CD4-positive, alpha-beta T cell (primary cell): ENCODE measurements at regions of chr9 and their contacts with region 1.

Region 1: GRCh38 chr9:33076358-33077004 is at the start of gene SMU1:
- DNase-seq: peak; percentile 90 to 98 (median 94)
- ATAC-seq: peak; percentile 90
- H3K4me3 ChIP-seq: peak within 1 kb of the TSS; percentile 67
- H3K4me3 Mint-ChIP-seq: peak within 1 kb of the TSS; percentile 97
- H3K27ac ChIP-seq: peak within 1 kb of the TSS; percentile 88 to 94
- H3K27ac Mint-ChIP-seq: peak within 1 kb of the TSS; percentile 98
- H3K4me1 ChIP-seq: peaks cover 42% of the 10 kb centered on the region
- H3K4me1 Mint-ChIP-seq: peaks cover 48% of the 10 kb centered on the region
- H3K27me3 ChIP-seq: no peaks in the 10 kb centered on the region
- H3K27me3 Mint-ChIP-seq: no peaks in the 10 kb centered on the region
- CTCF ChIP-seq: no peak
- total RNA-seq, gene SMU1: 25.1 to 26.0 TPM

Region 2: GRCh38 chr9:32940740-32941139 is 135.7 kb before region 1 on chr9:
- CTCF ChIA-PET with region 1: no interaction called
- POLR2A ChIA-PET with region 1: no interaction called
- intact Hi-C with region 1: no loop called
- DNase-seq: no peak
- ATAC-seq: no peak
- H3K4me3 ChIP-seq: no peak overlapping the region
- H3K4me3 Mint-ChIP-seq: no peak overlapping the region
- H3K27ac ChIP-seq: no peak overlapping the region
- H3K27ac Mint-ChIP-seq: no peak overlapping the region
- H3K4me1 ChIP-seq: no peaks in the 10 kb centered on the region
- H3K4me1 Mint-ChIP-seq: no peaks in the 10 kb centered on the region
- H3K27me3 ChIP-seq: no peaks in the 10 kb centered on the region
- H3K27me3 Mint-ChIP-seq: no peaks in the 10 kb centered on the region
- CTCF ChIP-seq: no peak

Region 3: GRCh38 chr9:33024966-33025571 is 51.4 kb before region 1 on chr9 and contains the start of gene DNAJA1:
- CTCF ChIA-PET with region 1: interaction called, 3 read pairs
- POLR2A ChIA-PET with region 1: interaction called, 33 read pairs
- intact Hi-C with region 1: loop called in 1 of 2 experiments (anchors 1 kb)
- DNase-seq: peak; percentile 90 to 98 (median 96)
- ATAC-seq: peak; percentile 83
- H3K4me3 ChIP-seq: peak within 1 kb of the TSS; percentile 90
- H3K4me3 Mint-ChIP-seq: peak within 1 kb of the TSS; percentile 96
- H3K27ac ChIP-seq: peak within 1 kb of the TSS; percentile 99 to 100
- H3K27ac Mint-ChIP-seq: peak within 1 kb of the TSS; percentile 93
- H3K4me1 ChIP-seq: peaks cover 43% of the 10 kb centered on the region
- H3K4me1 Mint-ChIP-seq: peaks cover 73% of the 10 kb centered on the region
- H3K27me3 ChIP-seq: no peaks in the 10 kb centered on the region
- H3K27me3 Mint-ChIP-seq: no peaks in the 10 kb centered on the region
- CTCF ChIP-seq: no peak
- total RNA-seq, gene DNAJA1: 150 to 156 TPM

Region 4: GRCh38 chr9:33044127-33044673 is 32.3 kb before region 1 on chr9:
- CTCF ChIA-PET with region 1: no interaction called
- POLR2A ChIA-PET with region 1: interaction called, 3 read pairs
- intact Hi-C with region 1: loop called in 1 of 2 experiments (anchors 5 kb)
- DNase-seq: peak; percentile 18 to 89 (median 51)
- ATAC-seq: peak; percentile 80
- H3K4me3 ChIP-seq: peak overlapping the region; percentile 63
- H3K4me3 Mint-ChIP-seq: peak overlapping the region; percentile 83
- H3K27ac ChIP-seq: peak overlapping the region; percentile 3 to 37
- H3K27ac Mint-ChIP-seq: peak overlapping the region; percentile 80
- H3K4me1 ChIP-seq: peaks cover 15% of the 10 kb centered on the region
- H3K4me1 Mint-ChIP-seq: peaks cover 24% of the 10 kb centered on the region
- H3K27me3 ChIP-seq: no peaks in the 10 kb centered on the region
- H3K27me3 Mint-ChIP-seq: no peaks in the 10 kb centered on the region
- CTCF ChIP-seq: no peak

Region 5: DNA sequence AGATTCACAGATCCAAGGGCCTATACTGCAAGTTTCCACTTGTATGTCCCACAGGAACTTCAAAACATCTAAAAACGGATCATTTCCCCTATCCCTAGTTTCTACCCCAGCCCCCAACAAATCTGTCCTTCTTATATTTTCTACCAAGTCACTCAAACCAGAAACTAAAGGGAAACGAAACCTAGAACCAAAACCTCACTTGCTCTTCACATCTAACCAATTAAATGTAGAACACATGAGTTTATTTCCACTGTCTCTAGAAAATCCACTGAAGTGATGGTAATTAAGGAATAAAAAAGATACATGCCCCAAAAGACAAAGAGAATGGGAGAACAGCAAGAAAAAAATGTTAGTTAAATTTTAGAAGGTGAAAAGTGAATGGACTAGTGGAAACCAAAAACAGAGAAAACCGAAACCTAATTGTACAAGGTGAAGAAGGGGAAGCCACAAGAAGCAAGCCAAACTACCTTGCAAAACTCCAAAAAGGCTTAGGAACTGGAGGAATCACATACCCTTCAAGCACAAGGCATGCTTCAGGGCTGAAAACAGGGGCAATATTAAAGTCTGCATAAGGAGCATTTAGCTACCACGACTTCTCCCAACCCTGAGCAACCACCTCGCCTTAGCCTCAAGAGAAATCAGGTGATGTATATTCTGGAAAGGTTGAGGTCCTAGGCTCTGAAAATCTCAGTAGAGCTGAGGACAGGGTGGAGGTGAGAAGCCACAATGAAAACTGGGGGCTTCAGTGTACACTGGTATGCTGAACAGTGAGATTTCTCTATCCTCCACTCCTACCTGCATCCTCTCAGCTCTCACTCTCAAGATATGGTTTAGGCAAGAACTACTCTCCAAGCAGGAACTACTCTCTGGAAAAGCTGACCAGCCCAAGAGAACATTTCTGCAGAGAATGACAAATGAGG is 11.1 kb before region 1 on chr9:
- CTCF ChIA-PET with region 1: interaction called, 3 read pairs
- POLR2A ChIA-PET with region 1: interaction called, 11 read pairs
- intact Hi-C with region 1: no loop called
- DNase-seq: peak in 1 of 14 experiments; percentile 13
- ATAC-seq: no peak
- H3K4me3 ChIP-seq: no peak overlapping the region
- H3K4me3 Mint-ChIP-seq: no peak overlapping the region
- H3K27ac ChIP-seq: no peak overlapping the region
- H3K27ac Mint-ChIP-seq: no peak overlapping the region
- H3K4me1 ChIP-seq: no peaks in the 10 kb centered on the region
- H3K4me1 Mint-ChIP-seq: peaks cover 14% of the 10 kb centered on the region
- H3K27me3 ChIP-seq: no peaks in the 10 kb centered on the region
- H3K27me3 Mint-ChIP-seq: no peaks in the 10 kb centered on the region
- CTCF ChIP-seq: no peak

Region 6: DNA sequence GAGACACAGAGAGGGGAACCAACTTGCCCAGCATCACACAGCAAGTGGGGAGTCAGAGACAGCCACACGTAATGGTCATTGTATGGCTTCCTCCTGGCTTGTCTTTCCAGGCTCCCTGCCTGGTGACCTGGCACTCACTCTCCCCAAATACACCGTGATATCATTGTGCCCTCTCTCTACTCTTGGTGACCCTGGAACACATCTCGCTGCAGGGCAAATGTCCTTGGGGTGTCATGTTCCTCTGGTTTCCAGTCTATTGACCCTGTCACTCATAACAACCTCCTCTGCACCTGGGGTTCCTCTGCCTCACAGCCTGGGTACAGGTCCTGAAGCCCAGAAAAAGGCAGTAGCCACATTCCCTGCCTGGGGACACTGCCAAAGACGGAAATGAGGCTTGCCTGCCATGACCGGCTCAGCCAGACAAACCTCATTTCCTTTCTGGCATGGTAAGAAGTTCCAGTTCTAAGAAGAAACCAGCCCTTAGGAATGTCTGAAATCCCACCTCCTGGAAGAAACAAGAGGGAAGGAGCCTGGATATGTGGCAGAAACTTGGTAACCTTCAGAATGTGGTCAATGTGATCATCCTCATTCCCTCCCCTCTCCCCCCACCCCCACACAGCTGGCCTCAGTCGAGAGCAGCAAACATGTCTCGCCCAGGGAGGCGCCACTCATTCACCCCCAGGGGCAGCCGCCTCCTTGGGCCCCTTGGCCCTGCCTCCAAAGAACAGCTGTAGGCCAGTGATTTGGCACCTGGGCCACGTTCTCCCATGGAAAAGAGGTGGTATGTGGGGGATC is 30.5 kb after region 1 on chr9:
- CTCF ChIA-PET with region 1: no interaction called
- POLR2A ChIA-PET with region 1: no interaction called
- intact Hi-C with region 1: no loop called
- DNase-seq: no peak
- ATAC-seq: no peak
- H3K4me3 ChIP-seq: no peak overlapping the region
- H3K4me3 Mint-ChIP-seq: no peak overlapping the region
- H3K27ac ChIP-seq: no peak overlapping the region
- H3K27ac Mint-ChIP-seq: no peak overlapping the region
- H3K4me1 ChIP-seq: no peaks in the 10 kb centered on the region
- H3K4me1 Mint-ChIP-seq: no peaks in the 10 kb centered on the region
- H3K27me3 ChIP-seq: no peaks in the 10 kb centered on the region
- H3K27me3 Mint-ChIP-seq: no peaks in the 10 kb centered on the region
- CTCF ChIP-seq: no peak

Region 7: GRCh38 chr9:33130508-33130911 is 54.0 kb after region 1 on chr9:
- CTCF ChIA-PET with region 1: no interaction called
- POLR2A ChIA-PET with region 1: no interaction called
- intact Hi-C with region 1: no loop called
- DNase-seq: peak in 2 of 14 experiments; percentile 31 to 47
- ATAC-seq: peak; percentile 46
- H3K4me3 ChIP-seq: no peak overlapping the region
- H3K4me3 Mint-ChIP-seq: no peak overlapping the region
- H3K27ac ChIP-seq: no peak overlapping the region
- H3K27ac Mint-ChIP-seq: peak overlapping the region; percentile 42
- H3K4me1 ChIP-seq: peaks cover 27% of the 10 kb centered on the region
- H3K4me1 Mint-ChIP-seq: peaks cover 32% of the 10 kb centered on the region
- H3K27me3 ChIP-seq: no peaks in the 10 kb centered on the region
- H3K27me3 Mint-ChIP-seq: no peaks in the 10 kb centered on the region
- CTCF ChIP-seq: no peak

Region 8: DNA sequence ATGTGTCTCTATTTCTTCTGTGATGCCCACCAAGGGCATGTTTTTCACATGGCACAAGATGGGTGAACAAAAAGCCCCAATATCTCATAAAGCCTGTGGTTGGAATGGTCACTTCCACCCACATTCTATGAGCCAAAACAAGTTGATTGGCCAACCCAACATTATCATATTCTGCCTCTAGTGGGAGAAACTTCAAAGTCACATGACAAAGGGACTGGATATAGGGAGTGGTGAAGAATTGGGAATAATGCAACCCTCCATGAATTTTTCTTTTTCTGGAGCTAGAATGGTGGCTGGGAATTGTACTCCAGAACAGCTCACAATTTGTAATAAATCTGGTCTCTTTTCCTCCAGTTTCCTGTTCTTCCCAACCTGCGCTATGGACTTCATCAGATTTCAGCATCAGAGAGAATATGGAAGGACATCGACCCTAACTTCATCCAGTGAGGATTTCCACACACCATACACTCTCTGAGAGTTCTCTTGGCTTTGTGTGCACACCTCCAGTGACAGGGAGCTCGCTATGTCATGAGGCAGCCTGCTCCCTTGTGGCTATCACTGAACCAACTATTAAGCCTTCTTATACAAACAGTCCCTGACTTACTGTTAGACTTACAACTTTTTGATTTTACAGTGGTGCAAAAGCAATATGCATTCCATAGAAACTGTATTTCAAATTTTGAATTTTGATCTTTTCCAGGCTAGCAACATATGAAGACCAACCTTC is 102.7 kb after region 1 on chr9:
- CTCF ChIA-PET with region 1: no interaction called
- POLR2A ChIA-PET with region 1: no interaction called
- intact Hi-C with region 1: loop called in 1 of 2 experiments (anchors 1 kb)
- DNase-seq: peak in 5 of 14 experiments; percentile 15 to 59 (median 41)
- ATAC-seq: peak; percentile 80
- H3K4me3 ChIP-seq: no peak overlapping the region
- H3K4me3 Mint-ChIP-seq: no peak overlapping the region
- H3K27ac ChIP-seq: no peak overlapping the region
- H3K27ac Mint-ChIP-seq: no peak overlapping the region
- H3K4me1 ChIP-seq: no peaks in the 10 kb centered on the region
- H3K4me1 Mint-ChIP-seq: peaks cover 5% of the 10 kb centered on the region
- H3K27me3 ChIP-seq: no peaks in the 10 kb centered on the region
- H3K27me3 Mint-ChIP-seq: no peaks in the 10 kb centered on the region
- CTCF ChIP-seq: no peak

Region 9: GRCh38 chr9:33225319-33226149 is 149.1 kb after region 1 on chr9:
- CTCF ChIA-PET with region 1: interaction called, 4 read pairs
- POLR2A ChIA-PET with region 1: interaction called, 4 read pairs
- intact Hi-C with region 1: loop called (anchors 1 kb)
- DNase-seq: peak; percentile 42 to 85 (median 64)
- ATAC-seq: peak; percentile 86
- H3K4me3 ChIP-seq: no peak overlapping the region
- H3K4me3 Mint-ChIP-seq: no peak overlapping the region
- H3K27ac ChIP-seq: no peak overlapping the region
- H3K27ac Mint-ChIP-seq: peak overlapping the region; percentile 2
- H3K4me1 ChIP-seq: peaks cover 10% of the 10 kb centered on the region
- H3K4me1 Mint-ChIP-seq: peaks cover 9% of the 10 kb centered on the region
- H3K27me3 ChIP-seq: no peaks in the 10 kb centered on the region
- H3K27me3 Mint-ChIP-seq: no peaks in the 10 kb centered on the region
- CTCF ChIP-seq: peak; percentile 90

Region 10: GRCh38 chr9:33264473-33265177 is 188.1 kb after region 1 on chr9 and contains the starts of genes BAG1 and CHMP5:
- CTCF ChIA-PET with region 1: no interaction called
- POLR2A ChIA-PET with region 1: interaction called, 5 read pairs
- intact Hi-C with region 1: loop called (anchors 1 to 2 kb)
- DNase-seq: peak; percentile 99 to 100 (median 100)
- ATAC-seq: peak; percentile 96
- H3K4me3 ChIP-seq: peak within 1 kb of the TSS; percentile 94
- H3K4me3 Mint-ChIP-seq: peak within 1 kb of the TSS; percentile 96
- H3K27ac ChIP-seq: peak within 1 kb of the TSS; percentile 59 to 86
- H3K27ac Mint-ChIP-seq: peak within 1 kb of the TSS; percentile 91
- H3K4me1 ChIP-seq: peaks cover 31% of the 10 kb centered on the region
- H3K4me1 Mint-ChIP-seq: peaks cover 63% of the 10 kb centered on the region
- H3K27me3 ChIP-seq: no peaks in the 10 kb centered on the region
- H3K27me3 Mint-ChIP-seq: no peaks in the 10 kb centered on the region
- CTCF ChIP-seq: no peak
- total RNA-seq, gene BAG1: 58.0 to 61.4 TPM
- total RNA-seq, gene CHMP5: 17.4 to 18.6 TPM